GM12878 (cell line): ENCODE measurements at regions of chr3 and their contacts with region 1.

Region 1: DNA sequence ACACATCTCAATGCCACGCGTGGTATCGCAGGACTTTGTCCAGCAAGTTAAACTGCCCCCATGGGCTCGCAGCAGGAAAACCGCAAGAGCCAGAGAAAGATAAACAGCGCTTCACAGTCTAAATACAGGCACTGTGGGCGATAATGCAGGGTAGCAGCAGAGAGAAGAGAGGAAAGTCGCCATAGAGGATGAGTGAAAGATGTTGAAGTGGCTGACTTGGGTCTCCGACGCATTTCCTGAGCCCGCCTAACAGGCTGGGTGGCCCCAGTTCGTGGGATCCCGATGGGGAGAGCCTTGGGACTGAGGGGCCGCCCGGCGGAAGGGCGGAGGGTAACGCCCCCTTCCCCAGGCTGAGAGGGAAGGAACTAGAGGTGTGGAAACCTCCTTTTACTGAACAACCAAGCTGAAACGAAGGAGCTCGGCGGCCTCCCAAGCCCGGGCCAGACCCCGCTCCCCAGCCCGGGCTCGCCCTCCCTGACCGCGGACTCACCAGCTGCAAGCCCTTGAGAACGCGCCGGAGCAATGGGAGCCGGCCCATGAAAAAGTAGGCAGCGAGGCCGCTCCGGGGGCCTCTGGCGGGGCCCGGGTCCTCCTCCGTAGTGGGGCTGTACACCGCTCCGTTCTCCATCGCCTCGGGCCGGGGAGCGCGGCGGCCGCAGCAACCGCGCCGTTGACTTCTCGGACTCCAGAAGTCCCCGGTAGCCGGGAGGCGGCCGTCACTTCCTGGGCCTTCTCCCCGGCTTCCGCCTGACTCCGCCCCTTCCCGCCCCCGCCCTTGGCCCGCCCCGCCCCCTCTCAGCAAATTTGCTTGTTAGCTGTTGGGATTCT is at the start of gene CMTM6:
- DNase-seq: no peak
- ATAC-seq: peak; percentile 85
- H3K4me3 ChIP-seq: peak within 1 kb of the TSS; percentile 88
- H3K27ac ChIP-seq: peak within 1 kb of the TSS; percentile 78
- H3K4me1 ChIP-seq: peaks cover 4% of the 10 kb centered on the region; the same call in 1 of the 2 replicates
- H3K27me3 ChIP-seq: no peaks in the 10 kb centered on the region
- CTCF ChIP-seq: no peak
- EP300 ChIP-seq: no peak
- POLR2A ChIP-seq: peak; percentile 86
- RAD21 ChIP-seq: 0 out of 2 replicates have a peak, but pooled peaks have one; percentile 6
- polyA plus RNA-seq, gene CMTM6: 27.1 to 39.0 TPM

Region 2: DNA sequence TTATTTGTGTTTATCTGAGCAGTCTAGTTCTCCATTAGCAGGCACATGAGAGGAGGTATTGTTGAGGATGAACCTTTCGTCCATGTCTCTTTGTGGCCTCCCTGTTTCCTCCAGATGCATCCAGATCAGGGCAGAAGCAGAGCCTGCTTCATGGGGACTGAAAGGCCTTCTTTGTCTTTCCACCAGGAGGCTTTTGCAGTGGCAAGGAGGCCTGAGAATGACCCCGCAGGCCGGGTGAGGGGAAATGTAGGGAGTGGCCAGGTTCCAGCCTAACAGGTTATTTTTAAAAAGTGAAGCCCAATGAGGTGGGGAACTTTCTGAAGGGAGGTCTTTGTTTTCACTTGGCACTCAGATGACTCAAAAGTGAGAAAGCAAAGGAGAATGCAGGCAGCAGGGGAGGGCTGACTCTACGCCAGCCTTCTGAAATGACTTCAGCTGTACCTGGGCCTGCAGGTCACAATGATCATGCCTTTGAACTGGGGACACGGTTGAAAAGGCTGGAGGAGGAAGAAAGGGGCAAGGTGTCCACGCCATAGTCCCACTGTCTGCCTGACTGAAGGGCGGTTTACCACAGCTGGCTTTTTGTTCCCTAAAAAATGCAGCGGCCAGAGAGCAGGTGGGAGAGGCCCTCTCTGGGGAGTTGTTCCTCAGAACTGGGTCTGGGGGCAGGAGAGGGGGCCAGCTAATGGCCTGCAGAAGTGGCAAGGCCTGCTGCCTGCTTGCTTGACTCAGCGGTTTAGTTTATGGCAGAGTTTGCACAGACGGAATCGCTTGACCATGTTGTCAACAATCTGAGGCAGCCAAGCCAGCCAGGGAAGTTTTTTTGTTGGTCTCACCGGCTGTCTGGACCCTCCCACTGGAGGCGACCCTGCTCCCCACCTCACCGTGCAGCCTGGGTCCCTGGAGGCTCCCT is 82.0 kb before region 1 on chr3:
- CTCF ChIA-PET with region 1: interaction called, 3 read pairs
- POLR2A ChIA-PET with region 1: interaction called, 4 read pairs
- RAD21 ChIA-PET with region 1: interaction called, 4 read pairs
- SMC1A ChIA-PET with region 1: interaction called, 3 read pairs
- in situ Hi-C with region 1: no loop called
- intact Hi-C with region 1: loop called (anchors 5 kb)
- DNase-seq: peak; percentile 56
- ATAC-seq: peak; percentile 91
- H3K4me3 ChIP-seq: no peak overlapping the region
- H3K27ac ChIP-seq: no peak overlapping the region
- H3K4me1 ChIP-seq: peaks cover 35% of the 10 kb centered on the region
- H3K27me3 ChIP-seq: no peaks in the 10 kb centered on the region
- CTCF ChIP-seq: peak in 1 of 3 experiments; percentile 22; a peak in 2 of 6 replicates
- EP300 ChIP-seq: peak; percentile 68 to 89; a peak in 3 of 4 replicates
- POLR2A ChIP-seq: no peak
- RAD21 ChIP-seq: peak; percentile 48

Region 3: GRCh38 chr3:32484436-32484835 is 17.9 kb before region 1 on chr3:
- CTCF ChIA-PET with region 1: interaction called, 5 read pairs
- POLR2A ChIA-PET with region 1: interaction called, 4 read pairs
- RAD21 ChIA-PET with region 1: interaction called, 5 read pairs
- SMC1A ChIA-PET with region 1: interaction called, 18 read pairs
- in situ Hi-C with region 1: no loop called
- intact Hi-C with region 1: no loop called
- DNase-seq: no peak
- ATAC-seq: no peak
- H3K4me3 ChIP-seq: no peak overlapping the region
- H3K27ac ChIP-seq: no peak overlapping the region
- H3K4me1 ChIP-seq: no peaks in the 10 kb centered on the region
- H3K27me3 ChIP-seq: no peaks in the 10 kb centered on the region
- CTCF ChIP-seq: no peak
- EP300 ChIP-seq: no peak
- POLR2A ChIP-seq: no peak
- RAD21 ChIP-seq: no peak

Region 4: GRCh38 chr3:32596909-32597369 is 94.6 kb after region 1 on chr3:
- CTCF ChIA-PET with region 1: no interaction called
- POLR2A ChIA-PET with region 1: no interaction called
- RAD21 ChIA-PET with region 1: no interaction called
- SMC1A ChIA-PET with region 1: no interaction called
- in situ Hi-C with region 1: no loop called
- intact Hi-C with region 1: no loop called
- DNase-seq: no peak
- ATAC-seq: no peak
- H3K4me3 ChIP-seq: no peak overlapping the region
- H3K27ac ChIP-seq: no peak overlapping the region
- H3K4me1 ChIP-seq: no peaks in the 10 kb centered on the region
- H3K27me3 ChIP-seq: peaks cover 0 to 3% of the 10 kb centered on the region in 2 experiments; a peak in 1 of 4 replicates
- CTCF ChIP-seq: no peak
- EP300 ChIP-seq: no peak
- POLR2A ChIP-seq: no peak
- RAD21 ChIP-seq: no peak

Region 5: GRCh38 chr3:32684800-32685542 is 182.6 kb after region 1 on chr3 and contains the start of gene CNOT10:
- CTCF ChIA-PET with region 1: no interaction called
- POLR2A ChIA-PET with region 1: interaction called, 11 read pairs
- RAD21 ChIA-PET with region 1: interaction called, 4 read pairs
- SMC1A ChIA-PET with region 1: interaction called, 4 read pairs
- in situ Hi-C with region 1: no loop called
- intact Hi-C with region 1: no loop called
- DNase-seq: peak; percentile 81
- ATAC-seq: peak; percentile 97
- H3K4me3 ChIP-seq: peak within 1 kb of the TSS; percentile 84
- H3K27ac ChIP-seq: peak within 1 kb of the TSS; percentile 76
- H3K4me1 ChIP-seq: peaks cover 4% of the 10 kb centered on the region
- H3K27me3 ChIP-seq: no peaks in the 10 kb centered on the region
- CTCF ChIP-seq: 0 out of 6 replicates have a peak, but pooled peaks of 2 of the 3 experiments have one; percentile 5 to 8
- EP300 ChIP-seq: peak in 1 of 2 experiments; percentile 37; a peak in 1 of 4 replicates
- POLR2A ChIP-seq: peak; percentile 87
- RAD21 ChIP-seq: no peak
- polyA plus RNA-seq, gene CNOT10: 18.2 to 34.6 TPM

Region 6: DNA sequence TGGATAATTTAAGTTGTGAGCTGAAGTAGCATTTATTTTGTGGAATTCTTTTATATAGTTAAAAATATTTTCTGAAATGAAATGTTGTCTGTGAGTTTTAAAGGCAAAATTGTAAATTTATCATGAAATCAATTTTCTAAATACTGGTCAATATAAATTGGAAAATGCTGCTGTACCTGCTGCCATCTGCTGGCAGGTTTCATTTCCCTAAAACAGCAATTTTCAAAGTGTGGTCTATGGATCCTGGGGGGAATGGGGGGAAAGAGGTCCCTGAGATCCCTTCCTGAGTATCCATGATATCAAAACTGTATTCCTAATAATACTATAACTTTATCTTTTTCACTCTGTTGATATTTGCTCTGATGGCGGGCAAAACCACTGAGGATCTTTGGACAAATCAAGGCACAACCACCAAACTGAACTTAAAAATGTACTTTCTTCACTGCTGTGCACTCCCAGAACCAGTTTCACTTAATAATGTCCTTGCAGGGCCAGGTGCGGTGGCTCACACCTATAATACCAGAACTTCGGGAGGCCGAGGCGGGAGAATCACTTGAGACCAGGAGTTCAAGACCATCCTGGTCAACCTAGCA is 431.9 kb after region 1 on chr3:
- CTCF ChIA-PET with region 1: interaction called, 3 read pairs
- POLR2A ChIA-PET with region 1: no interaction called
- RAD21 ChIA-PET with region 1: no interaction called
- SMC1A ChIA-PET with region 1: no interaction called
- in situ Hi-C with region 1: loop called (anchors 10 kb)
- intact Hi-C with region 1: no loop called
- DNase-seq: no peak
- ATAC-seq: peak; percentile 68
- H3K4me3 ChIP-seq: no peak overlapping the region
- H3K27ac ChIP-seq: no peak overlapping the region
- H3K4me1 ChIP-seq: no peaks in the 10 kb centered on the region
- H3K27me3 ChIP-seq: no peaks in the 10 kb centered on the region; a peak in 1 of 4 replicates
- CTCF ChIP-seq: peak; percentile 59 to 73 (median 70)
- EP300 ChIP-seq: no peak
- POLR2A ChIP-seq: no peak
- RAD21 ChIP-seq: peak; percentile 80

Region 7: DNA sequence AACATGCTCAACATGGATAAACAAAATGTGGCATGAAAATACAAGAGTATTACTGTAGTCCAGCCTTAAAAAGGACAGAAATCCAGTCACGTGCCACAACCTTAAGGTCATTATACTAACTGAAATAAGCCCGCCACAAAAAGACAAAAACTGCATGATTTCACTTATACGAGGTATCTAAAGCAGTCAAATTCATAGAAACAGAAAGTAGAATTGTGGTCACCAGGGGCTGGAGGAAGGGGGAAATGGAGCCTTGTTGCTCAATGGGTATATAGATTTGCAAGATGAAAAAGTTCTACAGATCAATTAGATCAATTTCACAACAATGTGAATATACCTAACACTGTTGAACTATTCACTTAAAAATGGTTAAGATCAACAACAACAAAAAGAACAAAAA is 587.2 kb after region 1 on chr3:
- CTCF ChIA-PET with region 1: no interaction called
- POLR2A ChIA-PET with region 1: no interaction called
- RAD21 ChIA-PET with region 1: no interaction called
- SMC1A ChIA-PET with region 1: no interaction called
- in situ Hi-C with region 1: loop called (anchors 10 kb)
- intact Hi-C with region 1: no loop called
- DNase-seq: peak; percentile 43
- ATAC-seq: peak; percentile 88
- H3K4me3 ChIP-seq: no peak overlapping the region
- H3K27ac ChIP-seq: no peak overlapping the region
- H3K4me1 ChIP-seq: peaks cover 17% of the 10 kb centered on the region
- H3K27me3 ChIP-seq: no peaks in the 10 kb centered on the region
- CTCF ChIP-seq: no peak
- EP300 ChIP-seq: 0 out of 4 replicates have a peak, but pooled peaks of 1 of the 2 experiments have one; percentile 15
- POLR2A ChIP-seq: no peak
- RAD21 ChIP-seq: no peak